ENCODE measurements at regions of chr9 and their contacts with region 1.

Region 1: GRCh38 chr9:90870621-90871326 is 69.2 kb downstream of the SYK start:
- DNase-seq: no peak
- H3K4me3 ChIP-seq: no peak overlapping the region
- H3K27ac ChIP-seq: no peak overlapping the region
- H3K27me3 ChIP-seq: peaks cover 7% of the 10 kb centered on the region
- CTCF ChIP-seq: peak; percentile 92

Region 2: DNA sequence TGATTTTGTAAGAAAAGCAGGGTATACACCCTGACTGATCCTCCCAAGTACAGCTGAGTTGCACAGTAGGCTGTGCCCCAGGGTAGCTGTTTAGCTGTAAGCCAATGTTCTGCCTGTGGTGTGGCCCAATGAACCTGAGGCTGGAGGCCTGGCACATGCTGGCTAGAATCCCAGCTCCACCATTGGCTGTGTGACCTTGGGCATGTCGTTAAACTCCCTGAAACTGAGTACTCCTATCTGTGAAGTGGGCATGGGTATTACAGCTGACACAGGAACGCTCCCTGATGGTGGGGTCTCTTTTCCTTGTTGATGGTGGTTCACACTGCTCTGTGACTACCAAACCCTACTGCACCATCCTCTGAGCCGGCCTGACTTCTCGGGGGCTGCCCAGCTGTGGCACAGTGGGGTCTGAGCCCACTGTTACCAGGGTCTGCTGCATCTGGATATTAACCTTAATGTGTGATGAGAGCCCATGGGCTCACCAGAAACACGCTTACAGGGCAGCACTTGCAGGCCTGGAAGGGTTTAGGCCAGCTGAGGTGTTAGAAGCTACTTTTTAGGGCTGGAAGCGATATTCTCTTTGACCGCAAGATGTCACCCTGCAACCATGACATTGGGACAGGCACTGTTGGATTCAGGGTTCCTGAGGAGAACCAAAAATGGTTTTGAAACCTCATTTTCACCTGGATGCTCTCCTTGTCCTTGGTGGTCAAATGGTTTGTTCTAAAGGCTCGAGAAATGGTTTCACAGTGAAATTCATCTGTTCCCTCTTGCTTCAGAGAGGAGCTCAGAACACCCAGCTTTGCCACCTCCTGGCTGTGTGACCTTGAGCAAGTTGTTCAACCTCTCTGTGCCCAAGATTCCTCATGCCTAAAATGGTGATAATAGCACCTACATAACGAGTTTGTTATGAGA is 1272.8 kb before region 1 on chr9:
- CTCF ChIA-PET with region 1: interaction called, 24 read pairs
- POLR2A ChIA-PET with region 1: no interaction called
- DNase-seq: peak; percentile 15
- H3K4me3 ChIP-seq: no peak overlapping the region
- H3K27ac ChIP-seq: no peak overlapping the region
- H3K27me3 ChIP-seq: peaks cover 34% of the 10 kb centered on the region
- CTCF ChIP-seq: peak; percentile 76

Region 3: GRCh38 chr9:90142580-90142979 is 728.2 kb before region 1 on chr9:
- CTCF ChIA-PET with region 1: interaction called, 34 read pairs
- POLR2A ChIA-PET with region 1: no interaction called
- DNase-seq: no peak
- H3K4me3 ChIP-seq: no peak overlapping the region
- H3K27ac ChIP-seq: no peak overlapping the region
- H3K27me3 ChIP-seq: no peaks in the 10 kb centered on the region
- CTCF ChIP-seq: peak; percentile 42

Region 4: GRCh38 chr9:90858457-90858901 is 12.3 kb before region 1 on chr9:
- CTCF ChIA-PET with region 1: no interaction called
- POLR2A ChIA-PET with region 1: no interaction called
- DNase-seq: no peak
- H3K4me3 ChIP-seq: no peak overlapping the region
- H3K27ac ChIP-seq: no peak overlapping the region
- H3K27me3 ChIP-seq: no peaks in the 10 kb centered on the region
- CTCF ChIP-seq: no peak